ENCODE measurements at regions of chr12 and their contacts with region 1.

Region 1: DNA sequence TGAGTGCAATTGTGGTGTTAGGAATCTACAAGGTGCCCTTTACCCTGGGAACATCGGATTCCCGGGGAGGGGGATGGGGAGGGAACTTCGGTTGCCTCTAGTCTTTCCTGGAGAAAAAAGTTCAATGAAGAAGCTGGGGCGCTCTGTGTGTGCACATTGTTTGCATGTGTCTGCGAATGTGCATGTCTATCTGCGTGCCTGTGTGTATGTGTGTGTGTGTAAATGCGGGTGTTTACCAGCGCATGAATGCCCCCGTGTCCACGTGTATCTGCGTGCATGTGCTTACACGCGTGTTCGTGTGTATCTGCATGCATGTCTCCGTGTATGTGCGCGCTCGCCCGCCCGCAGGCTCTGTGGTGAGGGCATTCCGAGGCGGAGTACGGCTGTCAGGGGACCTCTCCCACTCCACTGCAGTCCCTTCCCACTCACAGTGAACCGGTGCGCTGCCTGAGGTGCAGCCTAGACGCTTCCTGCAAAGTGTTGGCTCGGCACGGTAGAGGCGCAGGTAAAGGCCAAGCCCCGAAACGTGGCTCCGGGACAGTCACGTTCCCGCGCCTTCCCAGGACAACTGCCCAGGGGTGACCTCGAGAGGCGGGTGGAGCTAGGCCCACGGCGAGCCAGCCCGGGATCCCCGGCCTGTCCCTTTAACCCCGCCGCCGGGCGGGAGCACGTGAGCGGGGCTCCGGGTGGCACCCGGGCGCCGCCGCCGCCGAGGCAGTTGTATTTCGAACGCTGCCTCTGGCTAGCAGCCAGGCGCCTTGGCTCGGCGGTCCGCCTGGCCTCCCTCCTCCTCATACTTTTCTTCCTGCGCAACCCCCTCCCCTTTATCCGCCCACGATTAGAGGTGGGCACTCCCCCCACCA is 539 bp upstream of the HMGA2 start:
- DNase-seq: peak; percentile 60
- H3K4me3 ChIP-seq: peak overlapping the region; percentile 58 to 97 (median 71)
- H3K27ac ChIP-seq: peak overlapping the region; percentile 71
- H3K4me1 ChIP-seq: peaks cover 31% of the 10 kb centered on the region
- H3K27me3 ChIP-seq: no peaks in the 10 kb centered on the region
- CTCF ChIP-seq: no peak
- POLR2A ChIP-seq: no peak

Region 2: DNA sequence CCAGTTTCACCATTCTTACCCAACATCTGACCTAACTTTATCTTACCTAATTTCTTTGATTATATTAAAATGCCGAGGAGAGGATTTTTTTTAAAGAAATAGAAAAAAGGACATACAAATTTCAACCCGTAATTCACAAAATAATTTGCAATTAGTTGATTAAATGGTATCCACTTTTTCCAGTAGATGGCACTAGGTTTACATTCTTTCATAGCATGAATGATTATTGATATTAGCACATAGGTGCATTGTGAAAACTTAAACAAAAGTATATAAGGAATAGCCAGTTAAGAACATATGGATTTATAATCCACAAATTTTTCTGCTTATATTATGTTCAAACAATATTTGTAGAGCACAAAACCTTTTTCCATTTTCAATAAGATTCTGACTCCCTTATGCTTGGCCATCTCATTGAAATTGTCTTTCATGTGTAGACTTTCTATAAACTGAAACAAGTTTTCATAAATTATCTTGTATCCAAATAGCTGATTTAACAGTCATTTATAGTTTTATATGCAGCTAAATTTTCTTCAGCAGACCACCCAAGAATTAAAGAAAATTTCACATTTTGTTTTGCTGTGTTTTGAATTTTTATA is 509.9 kb before region 1 on chr12:
- CTCF ChIA-PET with region 1: interaction called, 4 read pairs
- POLR2A ChIA-PET with region 1: no interaction called
- dilution Hi-C with region 1: no loop called
- intact Hi-C with region 1: loop called (anchors 1 kb)
- DNase-seq: peak; percentile 48
- H3K4me3 ChIP-seq: no peak overlapping the region
- H3K27ac ChIP-seq: no peak overlapping the region
- H3K4me1 ChIP-seq: peaks cover 13% of the 10 kb centered on the region
- H3K27me3 ChIP-seq: no peaks in the 10 kb centered on the region
- CTCF ChIP-seq: peak; percentile 13 to 14
- POLR2A ChIP-seq: no peak

Region 3: GRCh38 chr12:65609359-65609771 is 214.4 kb before region 1 on chr12:
- CTCF ChIA-PET with region 1: no interaction called
- POLR2A ChIA-PET with region 1: no interaction called
- dilution Hi-C with region 1: no loop called
- intact Hi-C with region 1: loop called (anchors 1 kb)
- DNase-seq: peak; percentile 79
- H3K4me3 ChIP-seq: no peak overlapping the region
- H3K27ac ChIP-seq: peak overlapping the region; percentile 25
- H3K4me1 ChIP-seq: peaks cover 73% of the 10 kb centered on the region
- H3K27me3 ChIP-seq: no peaks in the 10 kb centered on the region
- CTCF ChIP-seq: peak; percentile 5 to 8
- POLR2A ChIP-seq: no peak

Region 4: GRCh38 chr12:65649126-65649525 is 174.6 kb before region 1 on chr12:
- CTCF ChIA-PET with region 1: no interaction called
- POLR2A ChIA-PET with region 1: no interaction called
- dilution Hi-C with region 1: no loop called
- intact Hi-C with region 1: no loop called
- DNase-seq: peak; percentile 98
- H3K4me3 ChIP-seq: no peak overlapping the region
- H3K27ac ChIP-seq: peak overlapping the region; percentile 95
- H3K4me1 ChIP-seq: peaks cover 38% of the 10 kb centered on the region
- H3K27me3 ChIP-seq: no peaks in the 10 kb centered on the region
- CTCF ChIP-seq: no peak
- POLR2A ChIP-seq: no peak

Region 5: DNA sequence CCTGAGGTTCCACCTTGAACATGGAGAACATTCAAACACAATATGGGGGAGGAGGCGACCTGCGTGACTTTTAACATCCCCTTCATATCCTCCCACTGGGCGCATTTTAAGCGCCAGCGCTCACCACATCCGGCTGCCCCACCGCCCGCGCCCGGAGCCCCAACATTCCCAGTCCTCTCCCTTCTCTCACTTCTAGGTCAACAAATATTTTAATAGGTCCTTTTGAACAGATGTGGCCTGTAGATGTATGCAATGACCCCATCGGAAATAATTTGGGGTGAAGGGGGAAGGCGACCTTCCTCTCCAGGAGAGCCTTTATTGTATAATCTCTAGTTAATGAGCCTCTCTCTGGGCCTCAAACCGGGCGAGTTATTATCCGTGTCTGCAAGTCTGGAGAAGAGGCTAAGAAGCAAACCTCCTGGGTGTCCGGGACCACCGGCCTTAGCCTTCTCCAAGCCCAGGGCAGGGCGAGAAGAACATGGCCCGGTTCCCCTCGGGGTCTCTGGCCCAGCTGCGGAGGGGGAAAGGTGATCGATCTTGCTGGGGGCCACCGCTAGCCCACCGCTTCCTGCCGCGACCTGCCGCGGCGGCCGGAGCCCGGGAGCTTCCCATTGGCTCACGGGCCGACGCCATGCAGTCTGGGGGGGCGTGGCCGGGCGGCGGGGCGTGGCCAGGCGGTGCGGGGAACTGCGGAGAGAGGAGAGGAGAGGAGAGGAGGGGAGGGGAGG is 82.7 kb before region 1 on chr12:
- CTCF ChIA-PET with region 1: no interaction called
- POLR2A ChIA-PET with region 1: no interaction called
- dilution Hi-C with region 1: no loop called
- intact Hi-C with region 1: loop called (anchors 1 kb)
- DNase-seq: peak; percentile 82
- H3K4me3 ChIP-seq: peak overlapping the region; percentile 75 to 88 (median 81)
- H3K27ac ChIP-seq: peak overlapping the region; percentile 77
- H3K4me1 ChIP-seq: peaks cover 5% of the 10 kb centered on the region
- H3K27me3 ChIP-seq: no peaks in the 10 kb centered on the region
- CTCF ChIP-seq: no peak
- POLR2A ChIP-seq: no peak

Region 6: DNA sequence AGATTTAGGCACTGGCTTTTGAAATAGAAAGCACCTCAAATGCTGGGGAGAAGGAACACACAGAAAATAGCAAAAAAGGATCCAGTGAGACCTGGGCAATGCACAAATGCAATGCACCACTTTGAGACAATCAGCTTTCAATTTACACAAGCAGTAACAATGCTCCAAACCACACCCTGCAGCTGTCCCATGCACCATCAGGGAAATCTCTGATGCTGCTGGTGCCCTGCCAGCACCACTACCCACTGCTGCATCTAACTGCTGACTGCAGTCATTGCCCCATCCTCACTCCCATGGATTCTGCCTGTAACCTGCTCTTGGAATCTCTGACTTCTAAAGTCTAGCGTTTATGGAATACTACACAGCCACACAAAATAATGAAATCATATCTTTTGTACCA is 20.5 kb before region 1 on chr12:
- CTCF ChIA-PET with region 1: no interaction called
- POLR2A ChIA-PET with region 1: no interaction called
- dilution Hi-C with region 1: no loop called
- intact Hi-C with region 1: no loop called
- DNase-seq: no peak
- H3K4me3 ChIP-seq: no peak overlapping the region
- H3K27ac ChIP-seq: no peak overlapping the region
- H3K4me1 ChIP-seq: peaks cover 3% of the 10 kb centered on the region
- H3K27me3 ChIP-seq: no peaks in the 10 kb centered on the region
- CTCF ChIP-seq: no peak
- POLR2A ChIP-seq: no peak

Region 7: DNA sequence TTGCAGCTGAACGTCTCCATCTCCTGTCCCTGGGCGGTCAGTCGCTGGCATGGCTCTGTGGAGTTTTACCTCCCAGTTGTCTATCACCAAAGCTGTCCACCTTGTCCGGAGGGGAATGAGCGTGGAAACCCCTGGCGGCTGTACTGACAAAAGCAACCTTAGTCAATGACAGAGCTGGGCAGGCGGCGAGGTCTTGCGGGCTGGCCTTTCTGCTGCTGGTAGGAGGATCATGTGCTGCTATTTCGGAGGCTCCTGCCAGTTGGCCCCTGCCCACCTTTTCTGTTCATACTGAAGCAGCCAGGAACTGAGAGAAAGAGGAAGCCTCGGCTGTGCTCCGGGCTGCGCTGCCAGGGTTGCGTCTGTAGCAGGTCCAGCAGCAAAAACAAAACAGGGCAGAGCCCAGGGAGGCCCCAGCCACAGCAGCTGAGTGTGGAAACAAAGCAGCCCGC is 58.2 kb after region 1 on chr12:
- CTCF ChIA-PET with region 1: interaction called, 3 read pairs
- POLR2A ChIA-PET with region 1: no interaction called
- dilution Hi-C with region 1: no loop called
- intact Hi-C with region 1: loop called (anchors 2 kb)
- DNase-seq: peak; percentile 91
- H3K4me3 ChIP-seq: peak overlapping the region in 2 of 3 experiments; percentile 0 to 16
- H3K27ac ChIP-seq: peak overlapping the region; percentile 70
- H3K4me1 ChIP-seq: peaks cover 93% of the 10 kb centered on the region
- H3K27me3 ChIP-seq: no peaks in the 10 kb centered on the region
- CTCF ChIP-seq: peak; percentile 32 to 53
- POLR2A ChIP-seq: no peak

Region 8: GRCh38 chr12:65986047-65986446 is 162.3 kb after region 1 on chr12:
- CTCF ChIA-PET with region 1: interaction called, 5 read pairs
- POLR2A ChIA-PET with region 1: no interaction called
- dilution Hi-C with region 1: no loop called
- intact Hi-C with region 1: loop called (anchors 1 kb)
- DNase-seq: peak; percentile 28
- H3K4me3 ChIP-seq: no peak overlapping the region
- H3K27ac ChIP-seq: no peak overlapping the region
- H3K4me1 ChIP-seq: no peaks in the 10 kb centered on the region
- H3K27me3 ChIP-seq: no peaks in the 10 kb centered on the region
- CTCF ChIP-seq: peak in 1 of 2 donors; percentile 12
- POLR2A ChIP-seq: no peak

Measured in endothelial cell of umbilical vein (primary cell).